Esophagus squamous epithelium (tissue), 5 donors: ENCODE measurements at regions of chr17 and their contacts with region 1.

Region 1: DNA sequence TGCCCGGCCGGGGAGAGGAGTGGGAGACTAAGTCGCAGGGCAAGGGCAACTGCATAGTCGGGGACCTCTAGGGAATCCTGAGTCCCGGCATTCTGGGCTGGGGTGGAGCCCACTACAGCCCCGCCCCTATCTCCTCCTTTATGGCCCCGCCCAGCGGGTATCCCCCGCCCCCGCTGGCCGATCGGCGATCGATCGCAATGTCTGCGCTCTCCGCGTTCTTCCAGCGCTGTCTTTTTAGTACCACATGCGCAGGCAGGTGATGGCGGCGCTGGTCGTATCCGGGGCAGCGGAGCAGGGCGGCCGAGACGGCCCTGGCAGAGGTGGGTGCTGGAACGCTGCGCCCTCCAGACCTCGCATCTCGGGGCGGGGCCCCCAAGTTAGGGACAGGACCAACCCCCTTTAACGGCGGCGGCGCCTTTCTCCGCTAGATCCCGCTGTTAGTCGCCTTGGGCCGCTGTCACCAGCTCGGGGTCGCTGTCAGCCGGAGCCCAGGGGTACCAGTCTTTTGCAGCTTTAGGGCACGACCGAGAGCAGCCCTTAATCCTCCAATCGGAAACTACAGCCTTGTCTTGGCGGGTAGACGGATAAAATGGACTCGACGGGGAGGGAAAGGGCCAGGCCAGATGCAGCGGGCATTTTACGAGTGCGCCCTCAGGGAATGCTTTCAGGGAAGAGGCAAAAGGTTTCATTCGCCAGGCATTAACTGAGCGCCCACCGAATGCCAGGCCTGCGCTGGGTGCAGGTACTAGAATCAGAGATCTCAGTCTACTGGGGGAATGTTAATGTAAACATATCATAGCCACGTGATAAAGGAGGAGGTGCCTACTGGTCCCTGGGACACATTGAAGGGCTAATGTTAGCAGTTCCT is at the start of gene DPH1:
- DNase-seq: peak; percentile 46
- H3K4me3 ChIP-seq: peak within 1 kb of the TSS; percentile 81 to 97 (median 90)
- H3K27ac ChIP-seq: peak within 1 kb of the TSS; percentile 67 to 85 (median 78)
- H3K4me1 ChIP-seq: peaks cover 16 to 47% (median 24%) of the 10 kb centered on the region in 3 donors
- H3K27me3 ChIP-seq: peaks cover 0 to 39% (median 0%) of the 10 kb centered on the region in 4 donors
- CTCF ChIP-seq: peak in 3 of 6 experiments; percentile 3 to 48 (median 32)
- POLR2A ChIP-seq: peak in 2 of 4 donors; percentile 39 to 41
- total RNA-seq, gene DPH1: 14.9 to 55.7 (median 22.7) TPM

Region 2: DNA sequence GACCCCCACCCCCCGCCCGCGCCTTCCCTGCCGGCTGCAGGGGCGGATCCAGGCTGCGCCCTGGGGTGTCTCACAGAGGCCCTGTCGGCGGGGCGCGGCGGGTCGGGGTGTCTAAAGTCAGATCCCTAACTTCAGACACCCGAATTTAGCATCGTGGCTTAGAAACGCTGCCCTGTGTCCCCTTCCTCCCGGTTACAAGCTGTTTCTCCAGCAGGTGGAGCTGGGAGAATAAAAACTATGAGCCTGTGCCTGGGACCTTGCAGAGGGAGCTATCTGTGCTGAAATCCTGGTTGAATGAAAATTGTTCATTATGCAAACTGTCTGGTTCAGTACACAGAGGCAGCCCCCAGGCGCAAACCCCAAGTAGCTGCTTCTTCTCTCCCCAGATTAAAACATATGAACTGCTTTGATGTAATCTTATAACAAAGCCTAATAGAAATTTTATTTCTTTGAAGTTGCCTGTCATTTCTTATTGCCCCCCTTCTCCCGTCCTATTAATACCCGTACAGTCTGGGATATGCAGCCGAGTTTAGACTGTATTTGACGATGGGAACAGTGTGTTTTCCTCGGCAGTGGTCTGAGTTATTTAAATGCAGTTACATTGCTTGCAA is 121.3 kb before region 1 on chr17:
- intact Hi-C with region 1: loop called (anchors 5 kb)
- DNase-seq: no peak
- H3K4me3 ChIP-seq: peak overlapping the region in 3 of 4 donors; percentile 23 to 55 (median 35)
- H3K27ac ChIP-seq: no peak overlapping the region
- H3K4me1 ChIP-seq: peaks cover 12 to 26% (median 13%) of the 10 kb centered on the region in 3 donors
- H3K27me3 ChIP-seq: peaks cover 0 to 98% (median 15%) of the 10 kb centered on the region in 4 donors
- CTCF ChIP-seq: peak; percentile 37 to 78 (median 68)
- POLR2A ChIP-seq: no peak

Region 3: DNA sequence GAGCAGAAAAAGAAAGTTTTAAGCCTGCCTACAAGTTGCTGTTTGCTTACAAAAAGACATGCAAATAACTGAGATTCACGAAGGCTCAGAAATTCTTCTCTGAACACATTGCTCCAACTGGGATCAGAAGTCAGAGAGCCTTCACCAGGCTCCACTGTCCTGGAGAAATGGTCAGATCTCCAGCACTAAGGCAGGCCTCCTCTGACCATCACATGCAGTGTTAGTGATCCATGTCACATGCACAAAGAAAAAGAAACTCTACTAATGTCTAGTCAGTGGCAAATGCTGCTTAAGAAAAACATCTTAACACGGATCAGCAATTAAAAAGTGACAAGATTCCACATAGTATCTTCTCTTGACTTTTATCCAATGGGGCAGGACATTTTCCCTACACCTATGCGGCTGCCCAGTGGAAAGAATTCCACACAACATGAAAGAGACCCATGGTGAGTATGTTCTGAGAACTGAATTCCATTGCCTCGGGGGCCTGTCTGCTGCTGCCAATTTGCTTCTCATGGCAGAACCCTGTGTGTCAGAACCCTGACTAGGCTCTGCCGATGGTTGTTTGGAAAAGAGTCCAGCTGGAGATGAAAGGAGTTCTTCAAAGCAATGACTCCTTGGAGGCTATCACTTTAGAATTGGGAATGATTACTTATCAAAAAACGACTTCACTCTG is 121.4 kb after region 1 on chr17:
- intact Hi-C with region 1: no loop called
- DNase-seq: no peak
- H3K4me3 ChIP-seq: no peak overlapping the region
- H3K27ac ChIP-seq: no peak overlapping the region
- H3K4me1 ChIP-seq: peaks cover 0 to 27% (median 2%) of the 10 kb centered on the region in 3 donors
- H3K27me3 ChIP-seq: no peaks in the 10 kb centered on the region
- CTCF ChIP-seq: no peak
- POLR2A ChIP-seq: no peak